ENCODE measurements at regions of chr20 and their contacts with region 1.

Region 1: GRCh38 chr20:17304774-17305173 is 77.9 kb downstream of the PCSK2 start:
- DNase-seq: no peak
- H3K4me3 ChIP-seq: no peak overlapping the region
- H3K27ac ChIP-seq: no peak overlapping the region
- H3K27me3 ChIP-seq: no peaks in the 10 kb centered on the region
- CTCF ChIP-seq: no peak

Region 2: DNA sequence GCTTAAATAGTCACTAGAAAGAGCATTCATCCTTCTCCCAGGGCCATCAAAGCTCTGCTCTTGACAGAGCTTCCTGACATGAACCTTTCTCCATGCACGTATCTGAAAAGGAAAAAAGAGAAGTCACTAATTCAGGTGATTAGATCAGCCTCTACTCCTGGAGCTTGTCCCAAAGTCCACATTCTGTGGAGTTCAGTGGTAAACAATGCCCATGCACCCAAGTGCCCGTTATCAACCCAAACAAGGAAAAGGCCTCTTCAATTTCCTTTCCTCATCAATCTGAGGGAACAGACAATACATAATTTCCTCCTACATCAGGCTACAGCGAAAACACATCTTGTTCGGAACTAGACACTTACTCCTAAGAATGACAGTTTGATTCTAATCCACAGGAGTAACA is 207.2 kb before region 1 on chr20:
- intact Hi-C with region 1: no loop called
- DNase-seq: no peak
- H3K4me3 ChIP-seq: no peak overlapping the region
- H3K27ac ChIP-seq: no peak overlapping the region
- H3K27me3 ChIP-seq: peaks cover 0 to 3% (median 0%) of the 10 kb centered on the region in 45 donors
- CTCF ChIP-seq: no peak

Region 3: DNA sequence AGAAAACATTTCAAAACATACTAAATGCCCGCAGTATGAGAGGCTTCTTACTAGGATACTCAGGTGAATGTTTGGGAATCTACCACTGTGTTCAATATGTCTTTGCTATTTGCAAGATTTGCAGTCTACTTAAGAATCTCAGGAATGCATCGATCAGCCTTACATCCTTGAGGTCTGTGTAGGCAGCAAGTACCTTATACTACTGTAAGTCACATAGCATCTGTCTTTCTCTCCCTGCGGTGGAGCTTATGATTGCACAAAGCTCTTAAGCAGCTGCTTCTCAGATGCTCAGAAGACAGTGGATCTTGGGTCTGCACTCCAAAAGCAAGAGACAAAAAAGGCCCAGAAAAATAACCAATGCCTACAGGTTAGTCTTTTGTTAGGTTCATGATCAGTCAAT is 56.5 kb before region 1 on chr20:
- intact Hi-C with region 1: loop called in 1 of 2 experiments (anchors 10 kb)
- DNase-seq: no peak
- H3K4me3 ChIP-seq: no peak overlapping the region
- H3K27ac ChIP-seq: no peak overlapping the region
- H3K27me3 ChIP-seq: no peaks in the 10 kb centered on the region
- CTCF ChIP-seq: no peak

Measured in dorsolateral prefrontal cortex (tissue), 120 donors.